Endothelial cell of umbilical vein (primary cell): ENCODE measurements at regions of chr2 and their contacts with region 1.

Region 1: DNA sequence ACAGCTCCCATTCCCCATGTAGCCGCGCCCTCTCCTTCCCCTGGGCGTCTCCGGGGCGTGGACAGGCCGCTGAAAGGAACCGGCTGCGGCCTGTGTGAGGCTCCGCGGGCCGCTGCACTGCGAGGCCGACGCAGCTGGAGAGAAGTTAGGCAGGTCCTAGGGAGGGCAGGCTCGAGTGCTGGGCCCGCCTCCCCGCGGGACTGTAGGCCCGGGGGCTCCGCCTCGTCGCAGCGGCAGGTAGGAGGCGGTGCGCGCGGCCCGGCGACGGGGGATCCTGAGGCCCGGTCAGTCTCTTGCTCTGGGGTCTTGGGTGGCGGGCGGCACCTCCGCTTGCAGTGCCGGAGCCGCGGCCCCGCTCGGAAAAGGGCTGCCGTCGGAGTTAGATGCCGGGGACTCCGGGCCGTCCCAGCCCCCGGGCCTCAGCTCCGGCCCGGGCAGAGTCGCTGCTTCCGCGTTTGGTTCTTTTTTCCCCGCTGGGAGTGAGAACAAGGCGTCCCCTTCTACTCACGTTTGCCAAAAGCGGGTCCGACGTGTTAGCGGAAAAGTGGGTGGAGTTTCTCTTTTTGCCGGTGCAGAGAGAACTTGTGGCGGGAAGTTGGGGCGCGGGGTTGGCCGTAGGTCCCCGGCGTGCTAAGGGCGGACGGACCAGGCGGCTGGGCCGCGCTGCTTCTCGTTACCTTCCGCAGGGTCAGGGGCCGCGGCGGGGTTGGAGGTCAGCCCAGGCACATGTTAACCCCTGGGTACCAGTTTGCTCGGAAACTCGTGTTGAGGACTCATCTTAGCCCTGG is at the start of gene VRK2:
- DNase-seq: peak; percentile 94
- H3K4me3 ChIP-seq: peak within 1 kb of the TSS; percentile 60 to 74 (median 68)
- H3K27ac ChIP-seq: peak within 1 kb of the TSS; percentile 97
- H3K4me1 ChIP-seq: peaks cover 45% of the 10 kb centered on the region
- H3K27me3 ChIP-seq: no peaks in the 10 kb centered on the region
- CTCF ChIP-seq: no peak
- POLR2A ChIP-seq: peak; percentile 92
- total RNA-seq, gene VRK2: 35.2 and 42.0 TPM in 2 replicates

Region 2: DNA sequence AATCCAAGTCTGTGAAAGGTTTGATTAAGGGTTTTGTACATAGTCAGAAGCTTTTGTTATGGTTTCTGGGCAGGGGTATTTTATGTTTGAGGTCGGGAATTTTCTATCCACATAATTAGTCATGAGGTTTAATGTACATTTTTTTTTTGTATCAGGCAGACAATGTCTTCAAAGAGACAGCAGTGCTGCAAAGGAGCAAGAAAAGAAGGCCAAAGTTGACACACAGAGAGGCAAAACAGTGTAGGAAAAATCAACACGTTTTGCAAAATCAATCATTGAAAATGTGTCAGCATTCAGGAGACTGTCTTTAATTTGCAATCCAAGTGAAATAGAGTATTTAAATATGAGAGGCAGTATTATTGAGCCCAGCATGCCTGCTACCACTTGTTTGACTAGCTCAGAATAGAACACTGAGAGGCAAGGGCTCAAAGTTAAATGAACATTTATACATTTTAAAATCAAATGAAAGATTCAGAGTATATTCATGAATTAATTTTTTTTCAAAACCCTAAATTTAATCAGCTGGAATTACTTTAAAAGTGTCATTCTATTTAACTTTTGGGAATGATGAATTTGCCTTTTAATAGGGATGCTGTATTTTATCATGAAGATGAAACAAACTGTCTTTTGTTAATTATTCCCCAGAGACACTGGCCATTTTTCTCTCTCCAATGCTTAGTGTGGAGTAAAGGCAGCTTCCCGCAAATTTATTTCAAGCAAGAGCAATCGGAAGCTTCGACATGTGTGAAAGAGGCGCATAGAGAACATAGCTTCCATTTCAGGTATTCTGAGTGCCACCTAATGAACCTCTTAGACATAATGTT is 11.1 kb after region 1 on chr2:
- CTCF ChIA-PET with region 1: interaction called, 6 read pairs
- POLR2A ChIA-PET with region 1: no interaction called
- dilution Hi-C with region 1: no loop called
- intact Hi-C with region 1: loop called (anchors 1 kb)
- DNase-seq: no peak
- H3K4me3 ChIP-seq: no peak overlapping the region
- H3K27ac ChIP-seq: no peak overlapping the region
- H3K4me1 ChIP-seq: no peaks in the 10 kb centered on the region
- H3K27me3 ChIP-seq: no peaks in the 10 kb centered on the region
- CTCF ChIP-seq: no peak
- POLR2A ChIP-seq: no peak

Region 3: DNA sequence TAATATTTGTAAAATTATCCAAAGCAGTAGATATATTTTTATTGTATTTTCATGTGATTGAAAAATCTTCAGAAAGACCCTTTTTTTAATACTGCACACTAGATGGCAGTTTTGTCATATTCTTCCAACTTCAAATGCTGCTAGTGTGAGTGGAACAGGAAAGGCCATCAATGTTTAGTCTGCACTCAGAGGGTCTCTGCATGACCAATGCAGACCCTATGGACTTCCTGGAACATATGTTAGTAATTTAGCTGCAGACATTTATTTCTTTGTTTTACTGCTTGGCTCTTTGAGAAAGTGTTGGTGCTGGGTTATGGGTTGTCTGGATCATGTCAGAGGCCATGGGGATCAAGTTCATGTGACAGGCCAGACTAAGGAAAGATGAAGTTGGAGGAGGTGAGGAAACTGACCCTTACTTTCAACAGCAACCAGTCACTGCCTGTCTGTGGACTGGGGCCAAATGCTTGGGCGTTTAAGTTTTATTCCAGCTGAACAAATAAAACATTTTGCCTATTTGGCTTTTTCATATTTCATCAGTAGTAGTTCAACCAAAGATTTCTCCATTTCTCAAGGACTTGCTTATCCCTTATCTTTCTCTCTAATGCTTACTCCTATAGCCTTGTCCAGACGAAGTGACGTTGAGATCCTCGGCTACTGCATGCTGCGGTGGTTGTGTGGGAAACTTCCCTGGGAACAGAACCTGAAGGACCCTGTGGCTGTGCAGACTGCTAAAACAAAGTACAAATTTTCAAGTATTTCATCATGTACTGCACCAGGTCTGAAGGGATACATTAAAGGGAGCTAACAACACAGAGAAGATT is 84.6 kb after region 1 on chr2:
- CTCF ChIA-PET with region 1: no interaction called
- POLR2A ChIA-PET with region 1: no interaction called
- dilution Hi-C with region 1: no loop called
- intact Hi-C with region 1: loop called (anchors 5 kb)
- DNase-seq: peak; percentile 46
- H3K4me3 ChIP-seq: no peak overlapping the region
- H3K27ac ChIP-seq: no peak overlapping the region
- H3K4me1 ChIP-seq: peaks cover 3% of the 10 kb centered on the region
- H3K27me3 ChIP-seq: no peaks in the 10 kb centered on the region
- CTCF ChIP-seq: no peak
- POLR2A ChIP-seq: no peak

Region 4: GRCh38 chr2:58182527-58182926 is 135.7 kb after region 1 on chr2:
- CTCF ChIA-PET with region 1: no interaction called
- POLR2A ChIA-PET with region 1: no interaction called
- dilution Hi-C with region 1: no loop called
- intact Hi-C with region 1: no loop called
- DNase-seq: no peak
- H3K4me3 ChIP-seq: no peak overlapping the region
- H3K27ac ChIP-seq: no peak overlapping the region
- H3K4me1 ChIP-seq: no peaks in the 10 kb centered on the region
- H3K27me3 ChIP-seq: no peaks in the 10 kb centered on the region
- CTCF ChIP-seq: no peak
- POLR2A ChIP-seq: no peak

Region 5: DNA sequence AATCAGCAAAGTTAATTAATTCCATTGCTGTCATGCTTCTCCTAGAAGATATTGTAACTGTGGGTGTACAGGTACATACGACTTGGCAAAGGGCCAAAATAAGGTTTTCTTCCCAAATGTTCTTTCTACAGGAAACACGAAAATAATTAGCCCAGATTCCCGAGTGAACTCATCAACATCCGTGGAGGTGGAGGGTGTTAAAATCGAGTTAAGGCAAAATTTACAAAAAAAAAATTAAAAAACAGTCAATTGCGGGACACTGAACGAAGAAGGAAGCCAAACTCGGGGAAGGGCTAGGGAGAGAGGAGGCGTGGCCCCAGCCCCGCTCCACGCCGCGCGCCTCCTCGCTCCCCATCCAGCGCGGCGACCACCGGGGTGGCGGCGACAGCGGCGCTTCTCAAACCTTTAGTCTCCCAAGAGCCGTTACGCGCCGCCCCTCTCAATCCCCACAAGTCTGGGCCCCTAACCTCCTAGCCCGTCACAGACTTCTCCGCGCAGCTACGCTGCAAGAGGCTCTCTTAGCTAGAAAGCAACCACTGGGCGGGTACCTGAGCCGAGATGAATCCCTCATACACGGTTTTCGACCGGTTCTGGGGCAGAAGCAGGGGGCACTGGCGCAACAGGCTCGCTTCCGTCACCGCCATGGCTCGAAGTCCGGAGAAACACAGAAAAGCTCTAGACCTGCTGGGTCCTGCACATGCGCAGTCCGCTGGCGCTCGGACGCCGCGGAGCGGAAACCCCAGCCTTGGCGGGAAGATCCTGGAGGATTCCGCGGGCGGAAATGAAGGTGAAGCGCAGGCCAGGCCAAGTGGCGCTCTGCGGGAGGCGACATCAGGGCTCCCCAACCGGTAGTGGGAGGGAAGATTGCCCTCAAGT is 194.1 kb after region 1 on chr2 and contains the start of gene FANCL:
- CTCF ChIA-PET with region 1: interaction called, 3 read pairs
- POLR2A ChIA-PET with region 1: no interaction called
- dilution Hi-C with region 1: no loop called
- intact Hi-C with region 1: loop called (anchors 2 kb)
- DNase-seq: peak; percentile 87
- H3K4me3 ChIP-seq: peak within 1 kb of the TSS; percentile 35 to 92 (median 73)
- H3K27ac ChIP-seq: peak within 1 kb of the TSS; percentile 27
- H3K4me1 ChIP-seq: peaks cover 16% of the 10 kb centered on the region
- H3K27me3 ChIP-seq: peaks cover 0 to 2% of the 10 kb centered on the region in 2 experiments
- CTCF ChIP-seq: no peak
- POLR2A ChIP-seq: peak; percentile 70
- total RNA-seq, gene FANCL: 15.8 and 16.7 TPM in 2 replicates